Activated CD8-positive, alpha-beta T cell treated with anti-CD3 and anti-CD28 coated beads for 36 hours (primary cell): ENCODE measurements at regions of chr17 and their contacts with region 1.

Region 1: GRCh38 chr17:4974115-4974670 is 6.6 kb upstream of the SPAG7 start:
- DNase-seq: no peak
- ATAC-seq: no peak
- H3K4me3 Mint-ChIP-seq: no peak overlapping the region
- H3K27ac Mint-ChIP-seq: peak overlapping the region; percentile 48
- H3K4me1 Mint-ChIP-seq: peaks cover 20% of the 10 kb centered on the region
- H3K27me3 Mint-ChIP-seq: no peaks in the 10 kb centered on the region
- CTCF ChIP-seq: no peak

Region 2: GRCh38 chr17:4986951-4987766 is 13.0 kb after region 1 on chr17 and contains the start of gene CAMTA2:
- CTCF ChIA-PET with region 1: interaction called, 5 read pairs
- POLR2A ChIA-PET with region 1: interaction called, 75 read pairs
- intact Hi-C with region 1: no loop called
- DNase-seq: peak; percentile 92
- ATAC-seq: peak; percentile 88
- H3K4me3 Mint-ChIP-seq: peak within 1 kb of the TSS; percentile 85
- H3K27ac Mint-ChIP-seq: peak within 1 kb of the TSS; percentile 92
- H3K4me1 Mint-ChIP-seq: peaks cover 30% of the 10 kb centered on the region
- H3K27me3 Mint-ChIP-seq: no peaks in the 10 kb centered on the region
- CTCF ChIP-seq: peak; percentile 64
- total RNA-seq, gene CAMTA2: 91.5 to 99.0 TPM